Dorsolateral prefrontal cortex (tissue), 120 donors: ENCODE measurements at regions of chr10 and their contacts with region 1.

Region 1: DNA sequence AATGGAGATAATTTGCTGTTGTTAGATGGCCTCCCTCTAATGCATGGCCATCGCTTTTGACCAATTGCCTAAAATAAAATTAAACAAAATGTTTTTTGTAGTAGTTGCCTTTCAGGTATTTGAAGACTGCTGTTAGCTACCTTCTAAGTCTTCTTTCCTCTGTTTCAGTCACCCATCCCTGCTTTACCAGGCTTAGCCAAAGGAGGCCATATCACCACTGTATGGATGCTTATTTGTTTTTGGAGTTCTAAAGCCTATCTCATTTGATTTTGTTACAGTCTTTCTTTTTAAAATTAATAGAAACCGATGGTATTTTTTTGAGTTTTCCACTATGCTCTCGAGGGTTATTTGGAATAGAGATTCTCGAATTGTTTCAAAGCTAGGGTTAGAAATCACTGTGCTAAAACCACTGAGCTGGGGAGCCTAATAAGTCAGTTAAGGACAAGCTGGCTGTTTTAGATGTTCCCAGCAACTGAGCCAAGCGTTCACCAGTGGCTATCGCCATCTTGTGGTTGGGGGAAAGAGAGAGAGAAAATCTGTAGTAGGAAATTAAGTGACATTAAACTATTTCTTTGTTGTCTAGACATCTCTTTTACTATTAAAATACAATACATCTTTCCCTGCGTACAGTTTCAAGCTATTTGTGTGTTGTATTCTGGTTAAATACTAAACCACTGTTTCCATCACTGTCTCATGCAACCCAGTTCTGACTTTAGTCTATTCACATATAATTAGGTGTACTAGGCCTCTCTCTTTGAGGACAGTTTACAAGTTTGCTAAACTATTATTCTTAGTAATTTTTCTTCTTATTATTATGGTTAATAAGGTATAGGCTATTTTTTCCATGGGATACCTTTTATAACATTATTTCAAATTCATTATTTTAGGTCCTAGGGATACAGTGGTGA is 52.2 kb downstream of the GPR158 start:
- DNase-seq: peak in 6 of 10 donors; percentile 12 to 55 (median 30)
- H3K4me3 ChIP-seq: no peak overlapping the region
- H3K27ac ChIP-seq: no peak overlapping the region
- H3K27me3 ChIP-seq: no peaks in the 10 kb centered on the region
- CTCF ChIP-seq: peak; percentile 31 to 91 (median 68)

Region 2: GRCh38 chr10:25026463-25026862 is 200.6 kb before region 1 on chr10:
- intact Hi-C with region 1: loop called in 1 of 2 experiments (anchors 10 kb)
- DNase-seq: no peak
- H3K4me3 ChIP-seq: peak overlapping the region in 4 of 59 donors; percentile 1 to 27 (median 16)
- H3K27ac ChIP-seq: peak overlapping the region in 11 of 59 donors; percentile 0 to 46 (median 18)
- H3K27me3 ChIP-seq: no peaks in the 10 kb centered on the region
- CTCF ChIP-seq: peak in 55 of 56 donors; percentile 51 to 82 (median 66)

Region 3: DNA sequence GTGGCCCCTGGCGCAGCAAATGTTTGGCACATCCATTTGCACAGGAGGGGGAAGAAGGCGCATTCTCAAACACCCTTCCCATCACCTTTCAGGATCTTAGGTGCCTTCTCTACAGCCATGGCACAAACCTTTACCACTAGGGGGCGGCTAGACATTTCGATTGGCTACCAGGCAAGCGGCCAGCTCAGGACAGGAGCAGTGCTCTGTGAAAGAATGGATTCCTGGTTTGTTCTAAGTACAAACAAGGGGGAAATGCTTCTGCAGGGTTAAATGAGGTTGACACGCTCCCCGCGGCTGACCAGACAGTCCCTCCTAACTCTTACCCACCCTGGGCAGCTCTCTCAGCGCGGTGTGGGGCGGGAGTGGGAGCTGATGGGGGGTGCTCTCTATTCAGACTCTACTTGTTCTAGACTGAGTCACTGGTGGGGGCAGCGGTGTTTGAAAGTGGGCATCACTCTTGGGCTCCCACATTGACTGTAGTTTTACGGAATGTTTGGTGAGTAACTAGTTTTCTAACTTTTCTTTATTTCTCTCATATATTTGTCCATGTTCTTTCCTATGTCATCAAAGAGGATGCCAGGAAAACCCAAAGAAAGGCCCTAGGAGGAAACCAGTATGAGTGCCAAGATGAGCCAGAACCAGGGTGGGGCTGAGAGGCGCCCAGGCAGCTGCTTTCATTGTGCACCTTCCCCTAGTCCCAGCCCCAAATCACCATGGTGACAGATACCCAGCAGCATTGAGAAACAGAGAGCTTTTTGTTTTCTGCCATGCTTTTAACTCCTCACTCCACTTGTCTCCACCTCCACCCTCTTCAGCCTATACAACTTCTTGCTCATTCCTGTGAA is 113.6 kb before region 1 on chr10:
- intact Hi-C with region 1: loop called (anchors 2 to 5 kb)
- DNase-seq: peak; percentile 61 to 91 (median 84)
- H3K4me3 ChIP-seq: peak overlapping the region in 52 of 59 donors; percentile 2 to 66 (median 39)
- H3K27ac ChIP-seq: peak overlapping the region in 13 of 59 donors; percentile 14 to 60 (median 30)
- H3K27me3 ChIP-seq: no peaks in the 10 kb centered on the region
- CTCF ChIP-seq: peak; percentile 61 to 93 (median 82)

Region 4: GRCh38 chr10:25174461-25175230 is 52.4 kb before region 1 on chr10 and contains the start of gene GPR158:
- intact Hi-C with region 1: loop called in 1 of 2 experiments (anchors 10 kb)
- DNase-seq: peak; percentile 75 to 96 (median 92)
- H3K4me3 ChIP-seq: peak within 1 kb of the TSS; percentile 33 to 83 (median 70)
- H3K27ac ChIP-seq: peak within 1 kb of the TSS in 57 of 59 donors; percentile 11 to 92 (median 74)
- H3K27me3 ChIP-seq: peaks cover 0 to 46% (median 8%) of the 10 kb centered on the region in 45 donors
- CTCF ChIP-seq: peak in 25 of 56 donors; percentile 6 to 42 (median 23)
- total RNA-seq, gene GPR158: 14.3 to 63.9 (median 45.8) TPM